Activated T-helper 2 cell treated with anti-CD3 and anti-CD28 coated beads, Interferon-gamma antibody, Interleukin-2, Interleukin-4, amounts not matched to agents 10 μg/mL and 5 μg/mL and 100 μg/mL, durations not matched to agents 14 hours and 24 hours and 36 hours (primary cell): ENCODE measurements at regions of chr5 and their contacts with region 1.

Region 1: GRCh38 chr5:14809369-14810155 is 62.0 kb downstream of the ANKH start:
- DNase-seq: peak; percentile 77
- H3K4me3 Mint-ChIP-seq: peak overlapping the region; percentile 76
- H3K27ac Mint-ChIP-seq: peak overlapping the region; percentile 94
- H3K4me1 Mint-ChIP-seq: peaks cover 44% of the 10 kb centered on the region
- H3K27me3 Mint-ChIP-seq: no peaks in the 10 kb centered on the region

Region 2: DNA sequence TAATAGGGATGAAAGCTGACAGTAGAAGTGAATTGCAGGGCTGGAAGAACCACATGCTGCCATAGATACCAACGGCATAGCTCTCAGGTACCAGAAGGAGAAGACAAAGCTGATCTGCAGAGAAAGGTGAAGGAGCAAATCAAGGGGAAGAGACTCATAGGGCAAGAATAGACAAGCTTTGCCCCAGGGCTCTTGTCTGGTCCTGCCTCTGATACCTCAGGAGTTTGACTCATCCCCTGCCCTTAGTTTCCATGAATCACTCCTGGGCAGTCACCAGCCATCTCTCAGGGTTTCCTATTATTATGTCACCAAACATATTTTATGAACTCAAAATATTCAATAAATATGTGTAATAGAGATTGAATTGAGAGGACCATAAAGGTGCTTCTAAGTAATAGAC is 1665.9 kb before region 1 on chr5:
- intact Hi-C with region 1: no loop called
- DNase-seq: no peak
- H3K4me3 Mint-ChIP-seq: no peak overlapping the region
- H3K27ac Mint-ChIP-seq: no peak overlapping the region
- H3K4me1 Mint-ChIP-seq: no peaks in the 10 kb centered on the region
- H3K27me3 Mint-ChIP-seq: no peaks in the 10 kb centered on the region

Region 3: DNA sequence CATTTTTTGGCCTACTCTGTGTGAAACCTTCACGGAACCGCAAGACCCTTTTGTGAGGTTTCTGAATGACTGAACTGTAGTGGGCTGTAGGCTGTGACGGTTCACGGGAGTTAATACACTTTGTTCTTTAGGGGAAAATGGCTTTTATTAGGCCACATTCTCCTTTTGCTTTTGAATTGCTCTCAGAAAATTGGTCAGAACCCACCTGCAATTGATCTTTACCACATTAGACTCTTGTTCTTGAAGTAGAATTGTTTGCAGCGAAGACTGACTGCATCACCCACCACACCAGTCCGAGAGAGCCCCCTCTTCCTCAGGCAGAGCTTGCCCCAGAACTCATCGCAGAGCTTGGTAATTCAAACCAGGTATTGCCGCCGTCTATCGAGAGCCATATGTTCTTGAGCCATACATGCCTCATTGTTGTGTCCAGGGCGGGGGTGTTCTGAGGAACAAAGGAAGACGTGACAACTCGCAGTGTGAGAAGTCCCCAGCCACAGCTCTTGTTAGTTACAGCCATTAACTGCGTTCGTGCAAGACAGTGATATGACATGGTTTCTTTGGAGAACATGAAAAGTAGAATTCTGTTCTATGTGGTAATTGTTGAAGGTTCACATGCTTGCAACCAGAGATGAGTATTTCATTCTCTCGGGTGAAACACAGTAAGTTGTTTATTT is 394.4 kb before region 1 on chr5:
- intact Hi-C with region 1: loop called (anchors 5 kb)
- DNase-seq: no peak
- H3K4me3 Mint-ChIP-seq: peak overlapping the region; percentile 43
- H3K27ac Mint-ChIP-seq: peak overlapping the region; percentile 91
- H3K4me1 Mint-ChIP-seq: peaks cover 69% of the 10 kb centered on the region
- H3K27me3 Mint-ChIP-seq: peaks cover 1% of the 10 kb centered on the region

Region 4: GRCh38 chr5:14664302-14665100 is 145.1 kb before region 1 on chr5 and contains the start of gene OTULIN:
- intact Hi-C with region 1: loop called (anchors 2 kb)
- DNase-seq: peak; percentile 85
- H3K4me3 Mint-ChIP-seq: peak within 1 kb of the TSS; percentile 96
- H3K27ac Mint-ChIP-seq: peak within 1 kb of the TSS; percentile 98
- H3K4me1 Mint-ChIP-seq: peaks cover 54% of the 10 kb centered on the region
- H3K27me3 Mint-ChIP-seq: no peaks in the 10 kb centered on the region
- total RNA-seq, gene OTULIN: 59.4 and 62.1 TPM in 2 replicates

Region 5: DNA sequence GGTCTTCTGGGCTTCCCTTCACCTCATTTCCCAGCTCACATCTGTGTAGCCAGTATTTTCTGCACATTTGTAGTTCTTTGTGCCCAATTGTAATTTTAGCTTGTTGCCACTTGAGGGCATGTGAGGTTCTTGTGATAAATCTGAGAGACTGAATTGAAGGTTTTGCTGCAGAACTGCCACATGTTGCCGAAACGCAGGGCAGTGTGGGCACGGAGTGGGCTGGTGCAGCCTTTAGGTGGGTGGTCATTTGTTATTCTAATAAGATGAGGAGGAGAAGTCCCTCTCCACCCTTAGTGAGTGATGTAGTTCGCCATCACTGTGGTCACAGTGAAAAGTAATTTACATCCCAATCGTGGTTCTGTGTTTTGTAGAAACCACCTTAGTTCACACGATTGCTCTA is 123.8 kb before region 1 on chr5:
- intact Hi-C with region 1: loop called (anchors 5 kb)
- DNase-seq: peak; percentile 21
- H3K4me3 Mint-ChIP-seq: no peak overlapping the region
- H3K27ac Mint-ChIP-seq: peak overlapping the region; percentile 48
- H3K4me1 Mint-ChIP-seq: peaks cover 16% of the 10 kb centered on the region
- H3K27me3 Mint-ChIP-seq: no peaks in the 10 kb centered on the region

Region 6: DNA sequence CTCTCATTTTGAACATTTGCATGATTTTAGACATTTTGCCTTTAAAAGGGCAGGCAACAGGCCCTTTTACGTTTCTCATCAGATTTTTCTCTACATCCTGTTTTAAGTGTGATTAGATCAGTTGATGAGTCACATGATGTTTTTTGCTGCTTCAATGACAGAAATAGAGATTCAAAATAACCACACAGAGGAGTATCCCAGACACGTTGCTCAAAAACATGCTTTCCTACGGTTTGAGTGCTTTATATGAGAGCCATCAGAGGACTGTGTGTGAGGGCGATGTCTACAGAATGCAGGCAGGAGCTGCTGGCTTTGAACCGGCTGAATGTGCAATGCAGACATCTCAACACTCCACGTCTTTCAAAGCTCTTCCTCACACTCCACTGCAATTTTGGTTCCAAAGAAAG is 102.9 kb before region 1 on chr5:
- intact Hi-C with region 1: loop called (anchors 1 kb)
- DNase-seq: peak; percentile 46
- H3K4me3 Mint-ChIP-seq: peak overlapping the region; percentile 79
- H3K27ac Mint-ChIP-seq: peak overlapping the region; percentile 99
- H3K4me1 Mint-ChIP-seq: peaks cover 76% of the 10 kb centered on the region
- H3K27me3 Mint-ChIP-seq: no peaks in the 10 kb centered on the region

Region 7: GRCh38 chr5:14727428-14727865 is 82.1 kb before region 1 on chr5:
- intact Hi-C with region 1: loop called (anchors 5 kb)
- DNase-seq: peak; percentile 57
- H3K4me3 Mint-ChIP-seq: no peak overlapping the region
- H3K27ac Mint-ChIP-seq: no peak overlapping the region
- H3K4me1 Mint-ChIP-seq: peaks cover 2% of the 10 kb centered on the region
- H3K27me3 Mint-ChIP-seq: no peaks in the 10 kb centered on the region

Region 8: DNA sequence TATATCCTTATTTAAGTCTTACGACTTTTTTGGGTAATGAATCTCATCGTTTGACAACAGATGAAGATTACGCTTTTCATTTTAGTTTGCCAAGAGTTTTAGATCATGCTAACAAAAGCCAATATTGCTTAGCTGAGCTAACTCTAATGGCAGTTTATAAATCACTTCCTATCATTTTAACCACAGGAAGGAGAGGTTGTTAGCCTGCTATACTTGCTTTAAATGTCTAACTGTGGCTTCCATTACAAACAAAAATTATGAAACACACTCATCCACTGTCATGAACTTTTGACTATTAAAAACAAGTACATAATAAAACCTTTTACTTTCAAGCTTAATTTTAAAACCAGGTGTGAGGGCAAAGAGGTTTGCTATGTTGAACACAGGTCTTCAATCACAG is 115.8 kb after region 1 on chr5:
- intact Hi-C with region 1: loop called (anchors 1 kb)
- DNase-seq: no peak
- H3K4me3 Mint-ChIP-seq: peak overlapping the region; percentile 45
- H3K27ac Mint-ChIP-seq: peak overlapping the region; percentile 87
- H3K4me1 Mint-ChIP-seq: peaks cover 50% of the 10 kb centered on the region
- H3K27me3 Mint-ChIP-seq: no peaks in the 10 kb centered on the region